IMR-90 (cell line): ENCODE measurements at regions of chr5 and their contacts with region 1.

Region 1: GRCh38 chr5:87412630-87413342 is at the start of gene CCNH:
- DNase-seq: peak; percentile 98
- ATAC-seq: peak; percentile 100
- H3K4me3 ChIP-seq: peak within 1 kb of the TSS; percentile 81
- H3K27ac ChIP-seq: peak within 1 kb of the TSS; percentile 89
- H3K4me1 ChIP-seq: no peaks in the 10 kb centered on the region
- H3K27me3 ChIP-seq: no peaks in the 10 kb centered on the region
- CTCF ChIP-seq: no peak
- POLR2A ChIP-seq: peak; percentile 96
- RAD21 ChIP-seq: no peak
- total RNA-seq, gene CCNH: 97.8 and 100 TPM in 2 replicates

Region 2: DNA sequence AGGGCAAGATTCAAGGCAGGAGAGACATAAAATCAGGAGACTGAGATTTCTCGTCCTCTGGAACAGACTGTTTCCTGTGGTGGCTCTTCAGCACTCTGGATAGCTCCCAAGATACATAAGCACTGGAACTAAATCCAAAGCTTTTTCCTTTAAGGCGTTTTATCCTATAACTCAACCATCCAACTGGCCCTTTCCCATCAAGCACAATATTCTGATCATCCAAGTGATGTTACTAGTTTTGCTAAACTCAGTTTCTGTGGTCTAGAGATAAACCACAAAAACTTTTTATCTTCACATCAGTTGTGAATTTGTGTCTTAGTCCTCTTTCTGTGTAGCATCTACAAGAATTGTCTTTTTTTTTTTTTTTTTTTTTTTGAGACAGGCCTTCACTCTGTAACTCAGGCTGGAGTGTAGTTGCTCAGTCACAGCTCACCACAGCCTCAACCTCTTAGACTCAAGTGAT is 495.6 kb before region 1 on chr5:
- CTCF ChIA-PET with region 1: no interaction called
- POLR2A ChIA-PET with region 1: no interaction called
- dilution Hi-C with region 1: no loop called
- in situ Hi-C with region 1: loop called (anchors 25 kb)
- intact Hi-C with region 1: no loop called
- DNase-seq: peak; percentile 49
- ATAC-seq: peak; percentile 76
- H3K4me3 ChIP-seq: no peak overlapping the region
- H3K27ac ChIP-seq: no peak overlapping the region
- H3K4me1 ChIP-seq: no peaks in the 10 kb centered on the region
- H3K27me3 ChIP-seq: no peaks in the 10 kb centered on the region
- CTCF ChIP-seq: no peak
- POLR2A ChIP-seq: no peak
- RAD21 ChIP-seq: no peak